HEK293 (cell line): ENCODE measurements at regions of chr12 and their contacts with region 1.

Region 1: GRCh38 chr12:121217063-121217462 is 7.1 kb downstream of the P2RX4 start:
- H3K4me3 ChIP-seq: no peak overlapping the region
- H3K27ac ChIP-seq: no peak overlapping the region
- H3K4me1 ChIP-seq: no peaks in the 10 kb centered on the region
- CTCF ChIP-seq: no peak

Region 2: GRCh38 chr12:121230538-121230907 is 13.5 kb after region 1 on chr12:
- CTCF ChIA-PET with region 1: interaction called, 12 read pairs
- POLR2A ChIA-PET with region 1: no interaction called
- H3K4me3 ChIP-seq: no peak overlapping the region
- H3K27ac ChIP-seq: no peak overlapping the region
- H3K4me1 ChIP-seq: no peaks in the 10 kb centered on the region
- CTCF ChIP-seq: no peak

Region 3: GRCh38 chr12:121245031-121245430 is 28.0 kb after region 1 on chr12:
- CTCF ChIA-PET with region 1: no interaction called
- POLR2A ChIA-PET with region 1: no interaction called
- H3K4me3 ChIP-seq: no peak overlapping the region
- H3K27ac ChIP-seq: no peak overlapping the region
- H3K4me1 ChIP-seq: no peaks in the 10 kb centered on the region
- CTCF ChIP-seq: no peak